Activated T-helper 1 cell treated with anti-CD3 and anti-CD28 coated beads, Interleukin-12 subunit alpha, Interleukin-12 subunit beta, Interleukin-2, Interleukin-4 antibody, amounts not matched to agents 30 ng/mL and 10 ng/mL and 1 ng/mL, durations not matched to agents 14 hours and 24 hours and 36 hours (primary cell): ENCODE measurements at regions of chr9 and their contacts with region 1.

Region 1: DNA sequence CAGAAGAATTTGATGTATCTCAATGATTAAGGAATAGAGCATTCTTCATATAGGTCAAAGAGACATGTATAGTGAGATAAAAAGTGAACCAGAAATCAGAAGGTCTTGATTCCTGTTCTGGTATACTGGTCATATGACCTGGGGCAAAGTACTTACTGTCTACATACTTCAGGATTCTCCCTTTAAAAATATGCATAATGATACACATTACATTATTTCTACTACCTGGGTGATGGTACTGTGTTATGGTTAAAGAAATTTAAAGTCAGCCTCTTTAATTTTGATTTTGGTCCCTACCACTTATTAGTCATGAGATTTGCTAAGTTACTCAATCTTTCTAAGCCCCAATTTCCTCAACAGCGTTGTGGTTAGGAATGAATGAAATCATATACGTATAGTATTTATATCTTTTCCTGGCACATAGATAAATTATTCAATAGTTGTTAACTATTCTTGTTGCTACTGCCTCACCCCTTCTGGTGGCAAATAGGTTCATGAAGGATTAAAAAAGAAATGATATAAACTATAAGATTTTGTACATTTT is 984.1 kb downstream of the TLE4 start:
- DNase-seq: no peak
- H3K4me3 Mint-ChIP-seq: no peak overlapping the region
- H3K27ac Mint-ChIP-seq: no peak overlapping the region
- H3K4me1 Mint-ChIP-seq: no peaks in the 10 kb centered on the region
- H3K27me3 Mint-ChIP-seq: no peaks in the 10 kb centered on the region

Region 2: DNA sequence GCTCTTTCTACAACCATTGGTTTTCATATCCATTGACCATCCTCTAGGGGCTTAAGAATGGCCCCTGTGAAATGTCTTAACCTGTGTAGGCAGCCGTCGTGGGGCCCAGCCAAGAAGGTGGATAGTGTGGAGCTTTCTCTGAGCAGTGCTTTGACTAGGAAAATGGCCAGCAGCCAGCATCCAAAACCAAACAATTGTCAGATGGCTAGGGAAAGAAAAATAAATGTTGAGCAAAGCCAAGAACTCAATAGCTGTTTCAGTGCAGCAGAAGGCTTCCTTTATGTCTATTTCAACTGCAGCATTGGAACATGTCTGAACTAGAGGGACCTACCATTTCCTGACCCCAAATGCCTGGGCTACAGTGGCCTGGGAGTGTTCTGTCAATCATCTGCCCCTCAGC is 609.1 kb before region 1 on chr9:
- intact Hi-C with region 1: no loop called
- DNase-seq: no peak
- H3K4me3 Mint-ChIP-seq: no peak overlapping the region
- H3K27ac Mint-ChIP-seq: no peak overlapping the region
- H3K4me1 Mint-ChIP-seq: no peaks in the 10 kb centered on the region
- H3K27me3 Mint-ChIP-seq: no peaks in the 10 kb centered on the region

Region 3: GRCh38 chr9:80522465-80522864 is 33.4 kb before region 1 on chr9:
- intact Hi-C with region 1: no loop called
- DNase-seq: no peak
- H3K4me3 Mint-ChIP-seq: no peak overlapping the region
- H3K27ac Mint-ChIP-seq: no peak overlapping the region
- H3K4me1 Mint-ChIP-seq: no peaks in the 10 kb centered on the region
- H3K27me3 Mint-ChIP-seq: no peaks in the 10 kb centered on the region

Region 4: GRCh38 chr9:80540387-80540786 is 15.5 kb before region 1 on chr9:
- intact Hi-C with region 1: loop called (anchors 2 kb)
- DNase-seq: no peak
- H3K4me3 Mint-ChIP-seq: no peak overlapping the region
- H3K27ac Mint-ChIP-seq: no peak overlapping the region
- H3K4me1 Mint-ChIP-seq: no peaks in the 10 kb centered on the region
- H3K27me3 Mint-ChIP-seq: no peaks in the 10 kb centered on the region

Region 5: GRCh38 chr9:80595192-80595591 is 39.3 kb after region 1 on chr9:
- intact Hi-C with region 1: no loop called
- DNase-seq: no peak
- H3K4me3 Mint-ChIP-seq: no peak overlapping the region
- H3K27ac Mint-ChIP-seq: no peak overlapping the region
- H3K4me1 Mint-ChIP-seq: no peaks in the 10 kb centered on the region
- H3K27me3 Mint-ChIP-seq: no peaks in the 10 kb centered on the region

Region 6: DNA sequence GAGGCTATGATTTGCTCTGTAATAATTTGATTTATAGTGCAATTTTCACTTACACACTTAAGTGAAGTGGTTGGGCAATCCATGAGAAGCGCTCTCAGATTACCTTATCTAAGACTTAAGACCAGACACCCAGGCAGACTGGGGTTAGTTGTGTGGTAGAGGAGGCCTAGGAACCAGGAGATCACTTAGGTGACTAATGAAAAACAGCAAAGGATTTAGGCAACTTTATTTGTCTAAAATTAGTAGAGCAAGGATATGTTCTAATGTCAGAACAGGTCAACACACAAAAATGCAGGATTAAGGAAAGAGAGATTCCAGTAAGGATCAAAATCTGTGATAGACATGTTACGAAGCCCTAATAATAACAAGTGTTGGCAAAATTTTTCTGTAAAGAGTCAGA is 219.7 kb after region 1 on chr9:
- intact Hi-C with region 1: no loop called
- DNase-seq: no peak
- H3K4me3 Mint-ChIP-seq: no peak overlapping the region
- H3K27ac Mint-ChIP-seq: no peak overlapping the region
- H3K4me1 Mint-ChIP-seq: no peaks in the 10 kb centered on the region
- H3K27me3 Mint-ChIP-seq: no peaks in the 10 kb centered on the region